ENCODE measurements at regions of chr7 and their contacts with region 1.

Region 1: GRCh38 chr7:7968543-7969305 is at the start of gene GLCCI1:
- DNase-seq: peak; percentile 98
- H3K4me3 Mint-ChIP-seq: no peak within 1 kb of the TSS
- H3K27ac Mint-ChIP-seq: peak within 1 kb of the TSS; percentile 11
- H3K4me1 Mint-ChIP-seq: peaks cover 5% of the 10 kb centered on the region
- H3K27me3 Mint-ChIP-seq: no peaks in the 10 kb centered on the region
- CTCF ChIP-seq: no peak
- total RNA-seq, gene GLCCI1: 5.3 and 7.4 TPM in 2 replicates

Region 2: GRCh38 chr7:7498856-7499580 is 469.7 kb before region 1 on chr7:
- CTCF ChIA-PET with region 1: no interaction called
- POLR2A ChIA-PET with region 1: no interaction called
- intact Hi-C with region 1: no loop called
- DNase-seq: no peak
- H3K4me3 Mint-ChIP-seq: no peak overlapping the region
- H3K27ac Mint-ChIP-seq: no peak overlapping the region
- H3K4me1 Mint-ChIP-seq: peaks cover 13% of the 10 kb centered on the region
- H3K27me3 Mint-ChIP-seq: no peaks in the 10 kb centered on the region
- CTCF ChIP-seq: no peak

Region 3: GRCh38 chr7:7566651-7567611 is 401.8 kb before region 1 on chr7 and contains the start of gene MIOS:
- CTCF ChIA-PET with region 1: no interaction called
- POLR2A ChIA-PET with region 1: interaction called, 4 read pairs
- intact Hi-C with region 1: loop called (anchors 10 kb)
- DNase-seq: peak; percentile 81
- H3K4me3 Mint-ChIP-seq: no peak within 1 kb of the TSS
- H3K27ac Mint-ChIP-seq: peak within 1 kb of the TSS; percentile 72
- H3K4me1 Mint-ChIP-seq: peaks cover 17% of the 10 kb centered on the region
- H3K27me3 Mint-ChIP-seq: no peaks in the 10 kb centered on the region
- CTCF ChIP-seq: no peak
- total RNA-seq, gene MIOS: 43.5 and 65.4 TPM in 2 replicates

Region 4: DNA sequence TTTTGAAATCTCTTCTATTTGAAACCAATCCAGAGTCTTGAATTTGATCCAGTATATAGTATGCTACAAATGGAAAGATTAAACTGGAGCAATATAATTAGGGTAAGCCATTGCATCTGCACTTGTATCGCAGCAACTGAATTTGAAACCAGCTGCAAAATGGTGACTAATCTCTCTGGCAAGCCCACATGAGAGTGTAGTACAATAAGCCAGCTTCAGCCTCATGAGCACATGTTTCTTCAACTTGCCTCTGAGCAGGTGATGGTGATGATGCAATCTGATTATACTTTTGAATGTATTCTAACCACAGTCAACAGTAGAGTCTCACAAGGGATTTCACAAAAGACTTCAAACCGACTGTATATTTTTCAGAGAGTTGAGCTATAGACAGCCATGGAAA is 249.5 kb before region 1 on chr7:
- CTCF ChIA-PET with region 1: interaction called, 4 read pairs
- POLR2A ChIA-PET with region 1: interaction called, 6 read pairs
- intact Hi-C with region 1: loop called (anchors 1 kb)
- DNase-seq: peak; percentile 96
- H3K4me3 Mint-ChIP-seq: peak overlapping the region; percentile 55
- H3K27ac Mint-ChIP-seq: peak overlapping the region; percentile 90
- H3K4me1 Mint-ChIP-seq: peaks cover 18% of the 10 kb centered on the region
- H3K27me3 Mint-ChIP-seq: no peaks in the 10 kb centered on the region
- CTCF ChIP-seq: no peak

Region 5: DNA sequence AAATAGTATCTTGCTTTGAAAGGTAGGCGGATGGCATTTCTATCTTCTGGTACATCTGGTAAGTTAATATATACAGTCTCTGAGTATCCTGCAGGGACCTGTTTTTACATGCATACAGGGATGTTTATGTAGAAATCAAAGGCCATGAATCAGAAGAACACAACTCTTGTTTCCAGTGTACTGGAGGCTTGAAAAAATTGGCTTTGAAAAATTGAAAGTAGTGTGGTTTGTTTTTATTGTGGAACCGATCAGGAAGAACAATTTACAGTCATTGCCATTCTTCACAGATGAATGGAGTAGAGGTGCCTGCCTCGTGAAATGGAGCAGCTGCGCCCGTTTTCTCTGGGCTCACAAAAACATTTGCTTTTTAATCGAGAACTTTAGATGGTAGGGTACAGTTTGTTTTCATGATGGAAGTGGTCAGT is 196.3 kb before region 1 on chr7:
- CTCF ChIA-PET with region 1: interaction called, 4 read pairs
- POLR2A ChIA-PET with region 1: interaction called, 80 read pairs
- intact Hi-C with region 1: no loop called
- DNase-seq: peak; percentile 58
- H3K4me3 Mint-ChIP-seq: peak overlapping the region; percentile 76
- H3K27ac Mint-ChIP-seq: peak overlapping the region; percentile 92
- H3K4me1 Mint-ChIP-seq: peaks cover 43% of the 10 kb centered on the region
- H3K27me3 Mint-ChIP-seq: no peaks in the 10 kb centered on the region
- CTCF ChIP-seq: no peak

Region 6: GRCh38 chr7:7870555-7870954 is 98.2 kb before region 1 on chr7:
- CTCF ChIA-PET with region 1: no interaction called
- POLR2A ChIA-PET with region 1: no interaction called
- intact Hi-C with region 1: no loop called
- DNase-seq: no peak
- H3K4me3 Mint-ChIP-seq: no peak overlapping the region
- H3K27ac Mint-ChIP-seq: no peak overlapping the region
- H3K4me1 Mint-ChIP-seq: no peaks in the 10 kb centered on the region
- H3K27me3 Mint-ChIP-seq: no peaks in the 10 kb centered on the region
- CTCF ChIP-seq: no peak

Region 7: GRCh38 chr7:7911371-7912155 is 57.2 kb before region 1 on chr7:
- CTCF ChIA-PET with region 1: interaction called, 3 read pairs
- POLR2A ChIA-PET with region 1: interaction called, 15 read pairs
- intact Hi-C with region 1: no loop called
- DNase-seq: peak; percentile 33
- H3K4me3 Mint-ChIP-seq: no peak overlapping the region
- H3K27ac Mint-ChIP-seq: peak overlapping the region; percentile 93
- H3K4me1 Mint-ChIP-seq: peaks cover 14% of the 10 kb centered on the region
- H3K27me3 Mint-ChIP-seq: no peaks in the 10 kb centered on the region
- CTCF ChIP-seq: no peak

Region 8: GRCh38 chr7:7989133-7989984 is 20.6 kb after region 1 on chr7:
- CTCF ChIA-PET with region 1: interaction called, 11 read pairs
- POLR2A ChIA-PET with region 1: interaction called, 15 read pairs
- intact Hi-C with region 1: no loop called
- DNase-seq: no peak
- H3K4me3 Mint-ChIP-seq: peak overlapping the region; percentile 26
- H3K27ac Mint-ChIP-seq: peak overlapping the region; percentile 32
- H3K4me1 Mint-ChIP-seq: peaks cover 6% of the 10 kb centered on the region
- H3K27me3 Mint-ChIP-seq: no peaks in the 10 kb centered on the region
- CTCF ChIP-seq: no peak

Region 9: GRCh38 chr7:8015100-8015748 is 46.5 kb after region 1 on chr7:
- CTCF ChIA-PET with region 1: no interaction called
- POLR2A ChIA-PET with region 1: no interaction called
- intact Hi-C with region 1: no loop called
- DNase-seq: no peak
- H3K4me3 Mint-ChIP-seq: no peak overlapping the region
- H3K27ac Mint-ChIP-seq: no peak overlapping the region
- H3K4me1 Mint-ChIP-seq: no peaks in the 10 kb centered on the region
- H3K27me3 Mint-ChIP-seq: no peaks in the 10 kb centered on the region
- CTCF ChIP-seq: no peak

Measured in MCF 10A (cell line).